IMR-90 (cell line): ENCODE measurements at regions of chr2 and their contacts with region 1.

Region 1: GRCh38 chr2:143217512-143218115 is 88.4 kb downstream of the ARHGAP15 start:
- DNase-seq: no peak
- ATAC-seq: no peak
- H3K4me3 ChIP-seq: no peak overlapping the region
- H3K27ac ChIP-seq: no peak overlapping the region
- H3K4me1 ChIP-seq: no peaks in the 10 kb centered on the region
- H3K27me3 ChIP-seq: no peaks in the 10 kb centered on the region
- CTCF ChIP-seq: no peak
- POLR2A ChIP-seq: no peak
- RAD21 ChIP-seq: no peak

Region 2: DNA sequence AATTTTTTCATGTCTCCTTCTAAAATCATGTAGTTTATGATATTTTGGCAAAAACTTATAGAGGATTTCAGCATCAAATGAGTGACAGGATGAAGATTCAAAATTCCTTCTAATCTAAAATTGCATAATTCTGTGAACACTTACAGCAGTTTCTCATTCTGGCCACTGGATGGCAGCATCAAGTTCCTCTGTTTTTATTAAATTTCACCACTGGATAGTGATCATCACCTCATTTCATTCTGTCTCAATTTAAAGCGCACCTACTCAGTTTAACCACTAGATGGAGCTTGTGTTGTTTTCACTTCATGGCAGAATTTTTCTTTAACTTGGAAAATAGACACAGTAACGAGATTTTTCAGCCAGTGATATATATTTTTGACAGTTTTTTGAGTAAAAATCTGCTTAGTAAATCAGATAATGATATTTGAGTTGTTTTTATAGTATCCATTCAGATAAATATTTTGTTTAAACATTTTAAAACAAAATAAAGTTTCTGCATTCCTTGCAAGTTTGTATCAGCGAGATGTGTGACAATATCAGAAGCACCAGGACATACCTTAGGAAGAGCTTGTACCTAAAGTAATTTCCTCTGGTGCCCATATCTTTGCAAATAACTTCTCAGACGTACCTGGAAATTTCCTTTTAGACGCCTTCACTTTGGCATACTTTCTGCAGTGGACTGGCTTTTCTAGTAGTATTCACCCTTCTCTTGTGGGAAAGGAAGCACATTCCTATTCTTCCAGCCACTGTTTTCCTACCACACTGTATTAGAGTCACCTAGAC is 183.1 kb before region 1 on chr2:
- CTCF ChIA-PET with region 1: interaction called, 12 read pairs
- POLR2A ChIA-PET with region 1: no interaction called
- dilution Hi-C with region 1: no loop called
- in situ Hi-C with region 1: no loop called
- intact Hi-C with region 1: loop called (anchors 1 kb)
- DNase-seq: peak; percentile 82
- ATAC-seq: peak; percentile 97
- H3K4me3 ChIP-seq: no peak overlapping the region
- H3K27ac ChIP-seq: no peak overlapping the region
- H3K4me1 ChIP-seq: no peaks in the 10 kb centered on the region; the same call in 1 of the 2 replicates
- H3K27me3 ChIP-seq: no peaks in the 10 kb centered on the region
- CTCF ChIP-seq: peak; percentile 99
- POLR2A ChIP-seq: no peak
- RAD21 ChIP-seq: peak; percentile 76

Region 3: GRCh38 chr2:143110758-143111428 is 106.7 kb before region 1 on chr2:
- CTCF ChIA-PET with region 1: interaction called, 4 read pairs
- POLR2A ChIA-PET with region 1: no interaction called
- dilution Hi-C with region 1: no loop called
- in situ Hi-C with region 1: no loop called
- intact Hi-C with region 1: loop called (anchors 1 kb)
- DNase-seq: peak; percentile 50
- ATAC-seq: peak; percentile 72
- H3K4me3 ChIP-seq: no peak overlapping the region
- H3K27ac ChIP-seq: no peak overlapping the region
- H3K4me1 ChIP-seq: no peaks in the 10 kb centered on the region
- H3K27me3 ChIP-seq: peaks cover 3% of the 10 kb centered on the region
- CTCF ChIP-seq: peak; percentile 55
- POLR2A ChIP-seq: no peak
- RAD21 ChIP-seq: peak; percentile 57